B cell (primary cell): ENCODE measurements at regions of chr1 and their contacts with region 1.

Region 1: GRCh38 chr1:157992031-157992832 is 1.2 kb upstream of the KIRREL1 start:
- DNase-seq: peak; percentile 75
- ATAC-seq: peak; percentile 70
- H3K4me3 ChIP-seq: no peak overlapping the region
- H3K4me3 Mint-ChIP-seq: peak overlapping the region; percentile 86
- H3K27ac ChIP-seq: no peak overlapping the region
- H3K27ac Mint-ChIP-seq: no peak overlapping the region
- H3K4me1 ChIP-seq: peaks cover 16 to 21% of the 10 kb centered on the region in 2 donors
- H3K4me1 Mint-ChIP-seq: peaks cover 19% of the 10 kb centered on the region
- H3K27me3 ChIP-seq: peaks cover 0 to 46% (median 24%) of the 10 kb centered on the region in 4 experiments
- H3K27me3 Mint-ChIP-seq: peaks cover 49% of the 10 kb centered on the region
- CTCF ChIP-seq: peak; percentile 98

Region 2: DNA sequence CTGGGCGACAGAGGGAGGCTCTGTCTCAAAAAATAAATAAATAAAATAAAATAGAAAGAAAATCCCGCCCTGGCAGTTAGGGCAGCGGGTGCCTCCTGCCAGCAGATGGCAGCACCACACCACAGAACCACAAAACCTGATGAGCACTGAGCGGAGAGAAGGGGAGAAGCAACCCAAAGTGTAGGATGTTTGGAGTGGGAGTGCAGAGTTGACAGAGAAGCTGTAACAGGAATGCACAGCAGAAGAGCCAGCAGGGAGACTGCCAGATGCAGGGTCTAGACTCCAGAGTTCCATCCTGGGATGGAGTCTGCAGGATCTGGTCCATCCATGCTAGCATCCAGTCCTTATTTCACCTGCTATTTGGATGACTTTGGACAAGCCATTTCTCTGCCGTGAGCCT is 28.5 kb before region 1 on chr1:
- CTCF ChIA-PET with region 1: interaction called, 19 read pairs
- POLR2A ChIA-PET with region 1: no interaction called
- intact Hi-C with region 1: no loop called
- DNase-seq: peak; percentile 74
- ATAC-seq: peak; percentile 57
- H3K4me3 ChIP-seq: no peak overlapping the region
- H3K4me3 Mint-ChIP-seq: no peak overlapping the region
- H3K27ac ChIP-seq: no peak overlapping the region
- H3K27ac Mint-ChIP-seq: no peak overlapping the region
- H3K4me1 ChIP-seq: no peaks in the 10 kb centered on the region
- H3K4me1 Mint-ChIP-seq: no peaks in the 10 kb centered on the region
- H3K27me3 ChIP-seq: peaks cover 0 to 16% (median 8%) of the 10 kb centered on the region in 4 experiments
- H3K27me3 Mint-ChIP-seq: peaks cover 25% of the 10 kb centered on the region
- CTCF ChIP-seq: peak; percentile 98

Region 3: GRCh38 chr1:157969697-157970485 is 22.3 kb before region 1 on chr1:
- CTCF ChIA-PET with region 1: interaction called, 19 read pairs
- POLR2A ChIA-PET with region 1: no interaction called
- intact Hi-C with region 1: no loop called
- DNase-seq: peak; percentile 18
- ATAC-seq: no peak
- H3K4me3 ChIP-seq: no peak overlapping the region
- H3K4me3 Mint-ChIP-seq: no peak overlapping the region
- H3K27ac ChIP-seq: no peak overlapping the region
- H3K27ac Mint-ChIP-seq: no peak overlapping the region
- H3K4me1 ChIP-seq: no peaks in the 10 kb centered on the region
- H3K4me1 Mint-ChIP-seq: peaks cover 2% of the 10 kb centered on the region
- H3K27me3 ChIP-seq: no peaks in the 10 kb centered on the region
- H3K27me3 Mint-ChIP-seq: peaks cover 15% of the 10 kb centered on the region
- CTCF ChIP-seq: peak; percentile 59

Region 4: GRCh38 chr1:158035976-158036583 is 43.8 kb after region 1 on chr1:
- CTCF ChIA-PET with region 1: interaction called, 12 read pairs
- POLR2A ChIA-PET with region 1: no interaction called
- intact Hi-C with region 1: loop called (anchors 5 kb)
- DNase-seq: peak; percentile 47
- ATAC-seq: no peak
- H3K4me3 ChIP-seq: no peak overlapping the region
- H3K4me3 Mint-ChIP-seq: no peak overlapping the region
- H3K27ac ChIP-seq: no peak overlapping the region
- H3K27ac Mint-ChIP-seq: no peak overlapping the region
- H3K4me1 ChIP-seq: no peaks in the 10 kb centered on the region
- H3K4me1 Mint-ChIP-seq: no peaks in the 10 kb centered on the region
- H3K27me3 ChIP-seq: peaks cover 0 to 7% (median 0%) of the 10 kb centered on the region in 4 experiments
- H3K27me3 Mint-ChIP-seq: peaks cover 26% of the 10 kb centered on the region
- CTCF ChIP-seq: peak; percentile 83

Region 5: GRCh38 chr1:158087320-158087927 is 95.2 kb after region 1 on chr1:
- CTCF ChIA-PET with region 1: interaction called, 13 read pairs
- POLR2A ChIA-PET with region 1: no interaction called
- intact Hi-C with region 1: no loop called
- DNase-seq: peak; percentile 63
- ATAC-seq: peak; percentile 87
- H3K4me3 ChIP-seq: no peak overlapping the region
- H3K4me3 Mint-ChIP-seq: no peak overlapping the region
- H3K27ac ChIP-seq: no peak overlapping the region
- H3K27ac Mint-ChIP-seq: no peak overlapping the region
- H3K4me1 ChIP-seq: no peaks in the 10 kb centered on the region
- H3K4me1 Mint-ChIP-seq: no peaks in the 10 kb centered on the region
- H3K27me3 ChIP-seq: no peaks in the 10 kb centered on the region
- H3K27me3 Mint-ChIP-seq: peaks cover 19% of the 10 kb centered on the region
- CTCF ChIP-seq: peak; percentile 80